ENCODE measurements at regions of chr7 and their contacts with region 1.

Region 1: DNA sequence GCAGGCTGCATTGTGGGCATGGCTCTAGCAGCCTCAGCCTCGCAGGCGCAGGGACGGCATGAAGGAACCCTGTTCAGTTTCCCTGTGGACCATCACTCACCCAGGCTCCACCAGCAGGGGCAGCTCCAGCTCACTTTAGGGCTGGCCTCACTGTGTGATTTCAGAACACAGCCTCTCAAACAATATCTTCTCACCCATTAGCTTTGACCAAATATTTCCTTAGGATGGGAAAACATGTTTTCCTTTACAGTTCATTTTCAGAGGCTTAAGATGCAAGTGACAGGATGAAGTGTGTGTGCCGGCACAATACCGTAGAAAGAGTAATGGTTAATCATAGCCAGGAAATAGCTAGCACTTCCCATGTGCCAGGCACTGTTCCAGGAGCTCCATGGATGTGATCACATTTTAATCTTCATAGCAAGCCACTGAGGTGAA is 58.2 kb downstream of the LANCL2 start:
- DNase-seq: peak; percentile 65
- H3K4me3 ChIP-seq: no peak overlapping the region
- H3K27ac ChIP-seq: no peak overlapping the region
- H3K4me1 ChIP-seq: peaks cover 18% of the 10 kb centered on the region
- H3K27me3 ChIP-seq: no peaks in the 10 kb centered on the region

Region 2: GRCh38 chr7:55288070-55288824 is 135.0 kb before region 1 on chr7:
- in situ Hi-C with region 1: loop called (anchors 5 kb)
- DNase-seq: peak; percentile 43
- H3K4me3 ChIP-seq: no peak overlapping the region
- H3K27ac ChIP-seq: no peak overlapping the region
- H3K4me1 ChIP-seq: no peaks in the 10 kb centered on the region
- H3K27me3 ChIP-seq: peaks cover 59% of the 10 kb centered on the region

Region 3: DNA sequence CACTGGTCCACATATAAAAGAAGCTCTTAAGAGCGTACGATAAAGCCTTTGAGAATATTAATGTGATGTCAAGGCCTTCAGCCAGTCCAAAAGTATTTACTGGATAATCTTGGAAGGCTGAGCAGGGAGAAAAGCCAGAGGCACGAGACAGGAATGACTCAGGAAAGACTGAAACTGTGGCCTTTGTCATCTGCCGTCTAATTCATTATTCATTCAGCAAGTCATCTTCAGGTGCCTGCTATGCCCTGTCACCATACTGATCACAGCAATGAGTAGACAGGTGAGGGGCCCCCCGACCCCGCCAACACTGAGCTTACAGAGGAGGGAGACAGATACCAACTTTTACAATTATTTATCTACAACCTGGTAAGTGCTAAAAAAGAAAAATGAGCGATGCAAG is 70.1 kb after region 1 on chr7:
- in situ Hi-C with region 1: no loop called
- DNase-seq: peak; percentile 55
- H3K4me3 ChIP-seq: no peak overlapping the region
- H3K27ac ChIP-seq: no peak overlapping the region
- H3K4me1 ChIP-seq: peaks cover 7% of the 10 kb centered on the region
- H3K27me3 ChIP-seq: no peaks in the 10 kb centered on the region

Measured in GM23248 (cell line).